ENCODE measurements at regions of chr1 and their contacts with region 1.

Region 1: GRCh38 chr1:73998348-73998959 is 199.5 kb downstream of the LRRIQ3 start:
- DNase-seq: no peak
- ATAC-seq: no peak
- H3K4me3 ChIP-seq: no peak overlapping the region
- H3K27ac ChIP-seq: no peak overlapping the region
- H3K4me1 ChIP-seq: no peaks in the 10 kb centered on the region
- H3K27me3 ChIP-seq: peaks cover 0 to 20% (median 0%) of the 10 kb centered on the region in 9 donors
- CTCF ChIP-seq: peak; percentile 25 to 62 (median 46)
- POLR2A ChIP-seq: no peak

Region 2: DNA sequence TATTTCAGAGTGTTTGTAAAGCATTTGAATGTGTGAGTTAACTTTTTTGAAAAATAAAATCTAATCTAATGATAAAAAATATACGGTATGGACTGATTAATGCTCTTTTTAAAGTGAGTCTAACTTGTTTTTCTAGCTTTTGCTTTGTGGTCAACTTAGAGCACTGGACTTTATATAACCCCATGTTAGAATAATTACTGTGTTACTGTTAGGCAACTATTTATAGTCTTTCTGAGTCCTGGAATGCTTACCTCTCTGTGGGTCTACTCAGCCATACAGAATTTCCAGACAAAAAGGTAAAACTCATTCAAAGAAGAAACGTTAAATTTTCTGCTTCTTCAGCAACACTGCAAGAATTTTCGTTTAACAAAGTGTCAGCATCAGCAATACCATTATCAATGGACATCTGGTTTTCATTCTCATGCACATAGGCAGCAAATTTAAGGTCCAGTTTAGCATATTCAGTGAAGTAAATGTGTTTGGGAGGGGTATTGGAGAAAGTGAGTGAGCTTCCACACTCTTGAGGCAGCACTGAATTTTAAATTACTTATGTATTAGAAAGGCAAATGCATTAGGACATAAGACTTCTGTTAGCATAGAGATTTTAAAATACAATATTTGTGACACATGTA is 1051.4 kb before region 1 on chr1:
- intact Hi-C with region 1: no loop called
- DNase-seq: no peak
- ATAC-seq: no peak
- H3K4me3 ChIP-seq: no peak overlapping the region
- H3K27ac ChIP-seq: no peak overlapping the region
- H3K4me1 ChIP-seq: no peaks in the 10 kb centered on the region
- H3K27me3 ChIP-seq: no peaks in the 10 kb centered on the region
- CTCF ChIP-seq: no peak
- POLR2A ChIP-seq: no peak

Region 3: DNA sequence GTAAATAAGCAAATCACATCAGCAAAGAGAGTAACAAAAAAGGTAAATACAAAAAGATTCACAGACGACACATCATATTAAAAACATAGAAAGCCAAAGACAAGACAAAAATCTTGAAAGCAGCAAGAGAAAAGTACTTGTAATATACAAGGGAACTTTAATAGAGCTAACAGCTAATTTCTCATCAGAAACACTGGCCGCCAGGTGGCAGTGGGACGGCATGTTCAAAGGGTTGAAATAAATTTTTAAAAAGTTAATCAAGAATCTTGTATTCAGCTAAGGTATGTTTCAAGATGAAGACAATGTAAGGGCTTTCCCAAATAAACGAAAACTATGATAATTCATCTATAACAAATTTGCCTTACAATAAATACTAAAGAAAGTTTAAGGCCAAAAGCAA is 158.5 kb before region 1 on chr1:
- intact Hi-C with region 1: loop called in 1 of 10 experiments (anchors 10 kb)
- DNase-seq: no peak
- ATAC-seq: no peak
- H3K4me3 ChIP-seq: no peak overlapping the region
- H3K27ac ChIP-seq: no peak overlapping the region
- H3K4me1 ChIP-seq: no peaks in the 10 kb centered on the region
- H3K27me3 ChIP-seq: no peaks in the 10 kb centered on the region
- CTCF ChIP-seq: peak in 5 of 12 donors; percentile 5 to 27 (median 13)
- POLR2A ChIP-seq: no peak

Region 4: GRCh38 chr1:74065081-74065480 is 66.6 kb after region 1 on chr1:
- intact Hi-C with region 1: no loop called
- DNase-seq: no peak
- ATAC-seq: no peak
- H3K4me3 ChIP-seq: no peak overlapping the region
- H3K27ac ChIP-seq: no peak overlapping the region
- H3K4me1 ChIP-seq: no peaks in the 10 kb centered on the region
- H3K27me3 ChIP-seq: no peaks in the 10 kb centered on the region
- CTCF ChIP-seq: no peak
- POLR2A ChIP-seq: no peak